Caco-2 (cell line): ENCODE measurements at regions of chr6 and their contacts with region 1.

Region 1: DNA sequence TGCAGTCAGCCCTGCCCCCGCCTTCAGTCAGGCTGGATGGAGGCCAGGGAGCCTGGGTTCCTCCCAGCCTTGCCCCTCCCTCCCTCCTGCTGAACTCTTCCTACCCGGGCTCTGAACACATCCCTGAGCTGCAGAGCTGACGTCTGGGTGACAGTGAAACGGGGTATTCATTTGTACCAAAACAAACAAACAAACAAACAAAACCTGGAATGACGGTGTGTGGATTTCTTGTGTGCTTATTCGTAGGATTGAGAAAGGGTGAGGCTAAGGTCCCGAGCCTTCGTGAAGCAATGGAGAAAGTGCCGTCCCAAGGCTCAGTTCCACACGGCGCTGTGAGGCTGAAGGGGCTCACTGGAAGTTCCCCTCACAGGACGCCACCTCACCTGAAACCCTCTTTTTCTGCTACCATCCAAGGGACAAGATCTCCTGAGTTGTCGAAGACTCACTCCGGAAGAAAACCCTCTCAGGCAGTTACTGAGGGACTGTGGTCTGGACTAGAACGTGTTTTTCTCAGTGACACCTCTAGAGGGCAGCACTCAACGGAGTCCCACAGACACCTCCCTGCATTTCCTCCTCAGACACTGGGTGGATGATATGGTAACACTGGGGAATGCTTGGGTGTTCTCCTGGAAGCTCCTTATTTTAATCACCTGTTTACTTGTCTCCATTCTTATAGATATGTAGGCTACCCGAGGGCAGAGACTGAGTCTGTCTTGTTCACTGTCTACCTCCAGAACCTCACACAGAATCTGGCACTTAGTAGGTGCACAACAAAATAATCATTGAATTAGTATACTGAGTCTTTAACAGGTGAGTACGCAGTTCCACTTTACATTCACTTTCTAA is 27.3 kb downstream of the GSTA3 start:
- DNase-seq: peak; percentile 76 to 79
- H3K4me3 ChIP-seq: peak overlapping the region; percentile 48
- H3K4me3 Mint-ChIP-seq: peak overlapping the region; percentile 71
- H3K27ac Mint-ChIP-seq: peak overlapping the region; percentile 85
- H3K4me1 ChIP-seq: 0 out of 2 replicates have a peak, but pooled peaks cover 4% of the 10 kb centered on the region
- H3K4me1 Mint-ChIP-seq: no peaks in the 10 kb centered on the region
- H3K27me3 ChIP-seq: no peaks in the 10 kb centered on the region
- H3K27me3 Mint-ChIP-seq: no peaks in the 10 kb centered on the region
- CTCF ChIP-seq: peak; percentile 79 to 84

Region 2: DNA sequence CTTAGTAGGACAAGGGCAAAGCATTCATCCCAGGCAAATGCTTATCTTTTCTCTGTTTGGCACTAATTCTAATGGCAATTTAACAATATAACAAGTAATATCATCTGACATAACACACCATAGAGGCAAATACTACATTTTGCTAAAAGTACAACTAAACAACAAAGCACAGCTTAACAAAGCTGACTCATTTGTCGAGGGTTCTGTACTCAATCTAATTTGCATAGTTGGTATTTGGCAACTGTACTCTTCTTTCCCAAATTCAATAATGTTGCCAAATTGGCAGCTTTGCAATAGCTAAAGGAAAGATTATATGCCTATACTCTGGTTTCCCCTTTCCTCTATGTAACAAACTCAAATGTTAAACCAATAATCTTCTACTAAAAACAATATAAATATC is 1255.8 kb before region 1 on chr6:
- CTCF ChIA-PET with region 1: no interaction called
- POLR2A ChIA-PET with region 1: no interaction called
- intact Hi-C with region 1: no loop called
- DNase-seq: no peak
- H3K4me3 ChIP-seq: no peak overlapping the region
- H3K4me3 Mint-ChIP-seq: no peak overlapping the region
- H3K27ac Mint-ChIP-seq: no peak overlapping the region
- H3K4me1 ChIP-seq: no peaks in the 10 kb centered on the region
- H3K4me1 Mint-ChIP-seq: no peaks in the 10 kb centered on the region
- H3K27me3 ChIP-seq: no peaks in the 10 kb centered on the region
- H3K27me3 Mint-ChIP-seq: peaks cover 3% of the 10 kb centered on the region
- CTCF ChIP-seq: no peak

Region 3: GRCh38 chr6:52839119-52840055 is 42.8 kb before region 1 on chr6:
- CTCF ChIA-PET with region 1: no interaction called
- POLR2A ChIA-PET with region 1: no interaction called
- intact Hi-C with region 1: loop called (anchors 5 kb)
- DNase-seq: peak; percentile 78 to 81
- H3K4me3 ChIP-seq: no peak overlapping the region
- H3K4me3 Mint-ChIP-seq: no peak overlapping the region
- H3K27ac Mint-ChIP-seq: no peak overlapping the region
- H3K4me1 ChIP-seq: no peaks in the 10 kb centered on the region
- H3K4me1 Mint-ChIP-seq: no peaks in the 10 kb centered on the region
- H3K27me3 ChIP-seq: no peaks in the 10 kb centered on the region
- H3K27me3 Mint-ChIP-seq: no peaks in the 10 kb centered on the region
- CTCF ChIP-seq: peak; percentile 67 to 71

Region 4: GRCh38 chr6:52922161-52922560 is 39.9 kb after region 1 on chr6:
- CTCF ChIA-PET with region 1: no interaction called
- POLR2A ChIA-PET with region 1: no interaction called
- intact Hi-C with region 1: loop called (anchors 1 kb)
- DNase-seq: no peak
- H3K4me3 ChIP-seq: no peak overlapping the region
- H3K4me3 Mint-ChIP-seq: no peak overlapping the region
- H3K27ac Mint-ChIP-seq: no peak overlapping the region
- H3K4me1 ChIP-seq: peaks cover 44% of the 10 kb centered on the region
- H3K4me1 Mint-ChIP-seq: peaks cover 50% of the 10 kb centered on the region
- H3K27me3 ChIP-seq: no peaks in the 10 kb centered on the region
- H3K27me3 Mint-ChIP-seq: no peaks in the 10 kb centered on the region
- CTCF ChIP-seq: no peak

Region 5: GRCh38 chr6:52976591-52977035 is 94.4 kb after region 1 on chr6:
- CTCF ChIA-PET with region 1: no interaction called
- POLR2A ChIA-PET with region 1: no interaction called
- intact Hi-C with region 1: loop called (anchors 1 kb)
- DNase-seq: peak; percentile 54 to 60
- H3K4me3 ChIP-seq: no peak overlapping the region
- H3K4me3 Mint-ChIP-seq: peak overlapping the region; percentile 12
- H3K27ac Mint-ChIP-seq: peak overlapping the region; percentile 85
- H3K4me1 ChIP-seq: peaks cover 14% of the 10 kb centered on the region
- H3K4me1 Mint-ChIP-seq: peaks cover 20% of the 10 kb centered on the region
- H3K27me3 ChIP-seq: no peaks in the 10 kb centered on the region
- H3K27me3 Mint-ChIP-seq: no peaks in the 10 kb centered on the region
- CTCF ChIP-seq: no peak